AG04450 (cell line): ENCODE measurements at regions of chr2 and their contacts with region 1.

Region 1: GRCh38 chr2:21836766-21837543 is 713.2 kb downstream of the TDRD15 start:
- DNase-seq: peak; percentile 66
- H3K4me3 ChIP-seq: no peak overlapping the region; the same call in 1 of the 2 replicates
- H3K27ac ChIP-seq: peak overlapping the region; percentile 35
- H3K27me3 ChIP-seq: no peaks in the 10 kb centered on the region
- CTCF ChIP-seq: no peak

Region 2: DNA sequence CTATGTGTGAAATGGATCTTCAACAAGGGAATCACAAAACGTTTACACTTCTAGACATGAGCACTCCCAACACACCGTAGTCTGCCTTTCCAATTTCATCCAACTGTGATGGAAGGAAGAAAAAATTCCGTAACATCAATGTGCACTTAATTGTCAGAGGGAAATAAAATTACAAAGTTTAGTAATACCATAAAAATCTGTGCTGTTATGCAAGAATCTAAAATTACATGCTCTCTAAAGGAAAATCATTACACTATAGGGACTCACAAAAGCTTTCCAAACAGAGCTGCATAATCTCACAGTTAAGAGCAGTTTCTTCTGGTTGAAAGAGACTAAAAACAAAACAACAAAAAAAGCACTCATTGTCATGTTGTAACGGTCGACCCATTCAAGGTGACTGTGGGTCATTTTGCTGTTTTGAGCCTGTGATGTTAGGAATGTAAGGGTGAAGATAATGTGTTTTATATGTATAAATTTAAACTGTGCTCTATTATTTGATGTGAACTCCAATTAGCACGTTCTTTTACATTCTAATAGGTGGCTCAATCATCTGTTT is 15.2 kb before region 1 on chr2:
- CTCF ChIA-PET with region 1: interaction called, 3 read pairs
- POLR2A ChIA-PET with region 1: interaction called, 22 read pairs
- DNase-seq: no peak
- H3K4me3 ChIP-seq: no peak overlapping the region
- H3K27ac ChIP-seq: no peak overlapping the region
- H3K27me3 ChIP-seq: no peaks in the 10 kb centered on the region
- CTCF ChIP-seq: no peak